Right cardiac atrium (tissue), 5 donors: ENCODE measurements at regions of chr15 and their contacts with region 1.

Region 1: GRCh38 chr15:25438601-25439368 is at the start of gene UBE3A:
- DNase-seq: peak; percentile 92 to 97 (median 97)
- ATAC-seq: peak; percentile 99
- H3K4me3 ChIP-seq: peak within 1 kb of the TSS; percentile 83
- H3K27ac ChIP-seq: peak within 1 kb of the TSS; percentile 86
- H3K4me1 ChIP-seq: no peaks in the 10 kb centered on the region
- H3K27me3 ChIP-seq: no peaks in the 10 kb centered on the region
- total RNA-seq, gene UBE3A: 100 to 119 (median 107) TPM

Region 2: DNA sequence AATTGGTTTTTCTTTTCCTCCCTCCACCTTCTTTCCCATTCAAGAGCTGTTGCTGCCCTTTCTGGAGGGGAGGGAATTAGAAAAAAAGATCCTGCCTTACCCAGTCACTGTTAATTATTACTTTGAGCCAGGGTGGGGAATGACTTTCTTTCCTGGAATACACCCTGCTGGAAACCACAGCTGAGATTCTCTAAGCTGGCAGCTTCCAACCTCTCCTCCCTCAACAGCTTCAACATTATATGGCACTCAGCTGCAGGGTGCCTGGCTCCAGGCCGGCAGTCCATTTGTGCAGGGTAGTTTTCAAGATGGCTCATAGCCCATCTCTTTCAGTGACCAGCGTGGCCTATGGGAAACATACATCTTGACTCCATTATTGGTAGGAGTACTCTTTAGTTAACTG is 105.7 kb before region 1 on chr15:
- intact Hi-C with region 1: loop called in 1 of 4 experiments (anchors 10 kb)
- DNase-seq: no peak
- ATAC-seq: no peak
- H3K4me3 ChIP-seq: no peak overlapping the region
- H3K27ac ChIP-seq: no peak overlapping the region
- H3K4me1 ChIP-seq: no peaks in the 10 kb centered on the region
- H3K27me3 ChIP-seq: no peaks in the 10 kb centered on the region

Region 3: DNA sequence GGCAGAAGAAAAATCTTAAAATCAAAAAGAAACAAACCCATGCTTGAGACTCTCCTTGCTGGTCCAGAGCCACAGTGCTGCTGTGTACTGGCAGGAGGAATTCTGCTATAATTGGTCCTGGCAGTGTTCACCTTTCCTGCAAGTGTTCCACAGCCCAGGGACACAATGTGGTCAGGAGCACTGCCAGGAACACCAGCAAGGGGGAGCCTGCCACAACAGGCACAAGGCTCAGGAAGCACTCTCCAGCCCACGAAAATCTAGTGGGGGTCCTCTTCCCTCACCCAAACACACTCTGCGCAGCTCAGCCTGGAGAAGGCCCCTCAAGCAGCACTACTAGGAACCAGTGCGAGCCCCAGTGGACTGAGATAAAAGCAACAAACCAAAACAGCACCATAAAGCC is 92.8 kb before region 1 on chr15:
- intact Hi-C with region 1: loop called in 1 of 4 experiments (anchors 10 kb)
- DNase-seq: peak; percentile 32 to 66 (median 60)
- ATAC-seq: peak; percentile 86 to 97
- H3K4me3 ChIP-seq: no peak overlapping the region
- H3K27ac ChIP-seq: peak overlapping the region; percentile 97
- H3K4me1 ChIP-seq: peaks cover 2% of the 10 kb centered on the region
- H3K27me3 ChIP-seq: no peaks in the 10 kb centered on the region

Region 4: GRCh38 chr15:25661898-25662297 is 223.1 kb after region 1 on chr15:
- intact Hi-C with region 1: no loop called
- DNase-seq: no peak
- ATAC-seq: no peak
- H3K4me3 ChIP-seq: no peak overlapping the region
- H3K27ac ChIP-seq: no peak overlapping the region
- H3K4me1 ChIP-seq: no peaks in the 10 kb centered on the region
- H3K27me3 ChIP-seq: no peaks in the 10 kb centered on the region